ENCODE measurements at regions of chr1 and their contacts with region 1.

Region 1: DNA sequence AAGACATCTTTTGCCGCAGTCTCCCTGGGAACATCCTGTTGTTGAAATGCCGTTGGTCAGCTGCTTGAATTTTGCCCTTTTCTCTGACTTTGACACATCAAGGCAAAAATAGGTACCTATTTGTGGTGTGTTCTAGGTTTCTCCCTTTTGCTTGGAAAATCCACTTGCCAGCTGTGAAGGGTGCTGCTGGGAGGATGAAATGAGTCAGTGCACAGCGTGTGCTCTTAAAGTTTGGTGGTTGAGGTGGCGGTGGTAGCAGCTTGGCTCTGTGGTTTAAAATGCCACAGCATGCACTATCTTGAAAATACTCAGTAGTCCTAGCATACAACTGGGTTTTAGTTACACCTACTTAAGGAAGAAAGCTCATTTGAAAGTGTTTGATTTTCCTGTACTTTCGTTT is 183.8 kb downstream of the DHRS3 start:
- DNase-seq: peak; percentile 89
- H3K4me3 Mint-ChIP-seq: no peak overlapping the region
- H3K27ac Mint-ChIP-seq: peak overlapping the region; percentile 59
- H3K4me1 Mint-ChIP-seq: peaks cover 74% of the 10 kb centered on the region
- H3K27me3 Mint-ChIP-seq: no peaks in the 10 kb centered on the region

Region 2: DNA sequence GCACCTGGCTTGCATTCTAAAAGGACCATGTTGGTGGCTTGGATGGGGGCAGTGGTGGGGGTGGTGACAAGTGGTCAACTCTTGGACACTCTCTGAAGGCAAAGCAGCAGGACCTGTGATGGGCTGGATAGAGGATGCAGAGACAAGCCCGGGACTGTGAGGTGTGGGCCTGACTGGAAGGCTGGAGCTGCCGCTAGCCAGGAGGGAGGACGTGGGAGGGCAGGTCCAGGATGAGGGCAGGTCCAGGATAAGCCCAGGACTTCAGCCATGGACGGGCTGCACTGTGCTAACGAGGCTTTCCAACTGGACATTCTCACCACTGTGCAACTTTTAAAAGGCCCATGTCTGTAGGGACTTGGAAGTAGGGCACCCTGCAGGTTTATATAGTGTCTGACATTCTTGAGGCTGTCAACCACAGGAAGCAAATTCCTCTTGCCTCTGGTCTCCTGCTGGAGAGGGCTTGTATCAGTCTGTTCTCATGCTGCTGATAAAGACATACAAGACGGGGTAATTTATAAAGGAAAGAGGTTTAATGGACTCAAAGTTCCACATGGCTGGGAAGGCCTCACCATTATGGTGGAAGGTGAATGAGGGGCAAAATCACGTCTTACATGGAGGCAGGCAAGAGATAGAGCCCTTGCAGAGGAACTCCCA is 680.5 kb before region 1 on chr1:
- CTCF ChIA-PET with region 1: no interaction called
- intact Hi-C with region 1: no loop called
- DNase-seq: no peak
- H3K4me3 Mint-ChIP-seq: no peak overlapping the region
- H3K27ac Mint-ChIP-seq: no peak overlapping the region
- H3K4me1 Mint-ChIP-seq: peaks cover 10% of the 10 kb centered on the region
- H3K27me3 Mint-ChIP-seq: no peaks in the 10 kb centered on the region

Region 3: GRCh38 chr1:12177999-12178441 is 256.2 kb before region 1 on chr1:
- CTCF ChIA-PET with region 1: no interaction called
- intact Hi-C with region 1: loop called (anchors 10 kb)
- DNase-seq: peak; percentile 96
- H3K4me3 Mint-ChIP-seq: peak overlapping the region; percentile 69
- H3K27ac Mint-ChIP-seq: peak overlapping the region; percentile 90
- H3K4me1 Mint-ChIP-seq: peaks cover 88% of the 10 kb centered on the region
- H3K27me3 Mint-ChIP-seq: no peaks in the 10 kb centered on the region

Region 4: GRCh38 chr1:12386130-12386529 is 48.0 kb before region 1 on chr1:
- CTCF ChIA-PET with region 1: no interaction called
- intact Hi-C with region 1: loop called (anchors 1 kb)
- DNase-seq: peak; percentile 68
- H3K4me3 Mint-ChIP-seq: no peak overlapping the region
- H3K27ac Mint-ChIP-seq: peak overlapping the region; percentile 80
- H3K4me1 Mint-ChIP-seq: peaks cover 43% of the 10 kb centered on the region
- H3K27me3 Mint-ChIP-seq: no peaks in the 10 kb centered on the region

Region 5: DNA sequence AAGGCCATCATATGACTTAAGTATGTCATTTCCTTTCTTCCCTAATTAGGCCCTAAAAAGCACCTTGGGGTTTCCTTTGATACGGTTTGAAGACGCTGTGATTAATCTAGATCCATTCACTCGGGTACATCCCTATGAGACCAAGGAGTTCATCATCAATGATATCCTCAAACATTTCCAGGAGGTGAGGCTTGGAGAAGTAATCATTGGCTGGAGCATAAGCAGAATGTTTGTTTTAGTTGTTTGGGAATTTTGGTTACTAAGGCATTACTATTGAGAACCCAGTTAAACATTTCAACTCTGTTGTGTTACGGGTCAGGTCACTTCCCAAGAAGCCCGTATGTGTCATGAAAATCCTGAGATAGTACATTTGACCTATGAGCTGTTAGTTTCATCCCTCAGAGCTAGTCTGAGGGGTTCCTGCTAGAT is 19.1 kb before region 1 on chr1:
- CTCF ChIA-PET with region 1: interaction called, 7 read pairs
- intact Hi-C with region 1: loop called (anchors 1 kb)
- DNase-seq: no peak
- H3K4me3 Mint-ChIP-seq: no peak overlapping the region
- H3K27ac Mint-ChIP-seq: peak overlapping the region; percentile 26
- H3K4me1 Mint-ChIP-seq: peaks cover 35% of the 10 kb centered on the region
- H3K27me3 Mint-ChIP-seq: no peaks in the 10 kb centered on the region

Region 6: GRCh38 chr1:12472798-12473551 is 38.8 kb after region 1 on chr1:
- CTCF ChIA-PET with region 1: interaction called, 5 read pairs
- intact Hi-C with region 1: loop called (anchors 1 kb)
- DNase-seq: peak; percentile 95
- H3K4me3 Mint-ChIP-seq: peak overlapping the region; percentile 56
- H3K27ac Mint-ChIP-seq: peak overlapping the region; percentile 98
- H3K4me1 Mint-ChIP-seq: peaks cover 89% of the 10 kb centered on the region
- H3K27me3 Mint-ChIP-seq: no peaks in the 10 kb centered on the region

Region 7: DNA sequence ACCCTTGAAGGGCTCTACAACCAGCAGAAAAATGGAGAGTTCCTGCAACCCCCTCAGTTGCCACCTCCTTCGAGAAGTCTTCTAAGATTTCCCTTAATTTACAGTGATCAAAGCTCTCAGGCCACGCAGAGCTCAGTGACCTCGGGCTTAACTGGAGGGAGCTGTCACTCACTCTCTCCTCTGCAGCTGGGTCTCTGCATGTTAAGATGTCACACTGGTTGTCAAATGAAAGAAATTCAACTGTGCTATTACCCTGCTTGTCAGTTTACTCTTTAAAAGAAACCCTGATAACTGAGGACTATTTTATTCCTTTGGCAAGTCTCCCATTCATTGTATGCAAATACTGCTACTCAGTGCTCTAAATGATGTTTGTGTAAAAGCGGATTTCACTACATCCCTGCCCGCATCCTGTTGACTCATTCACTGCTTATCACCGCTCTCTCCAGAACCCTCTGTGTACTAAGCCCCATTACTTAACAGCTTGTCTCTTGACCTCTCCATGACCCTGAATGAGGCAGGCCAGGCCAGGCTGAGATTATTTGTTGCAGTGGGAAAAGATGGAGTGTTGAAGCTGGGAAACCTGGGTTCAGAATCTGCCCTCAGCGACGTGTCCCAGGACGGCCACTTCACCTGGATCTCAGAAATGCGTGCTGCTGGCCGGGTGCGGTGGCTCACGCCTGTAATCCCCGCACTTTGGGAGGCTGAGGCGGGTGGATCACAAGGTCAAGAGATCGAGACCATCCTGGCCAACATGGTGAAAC is 170.1 kb after region 1 on chr1:
- CTCF ChIA-PET with region 1: no interaction called
- intact Hi-C with region 1: loop called (anchors 1 kb)
- DNase-seq: peak; percentile 90
- H3K4me3 Mint-ChIP-seq: peak overlapping the region; percentile 10
- H3K27ac Mint-ChIP-seq: peak overlapping the region; percentile 79
- H3K4me1 Mint-ChIP-seq: peaks cover 71% of the 10 kb centered on the region
- H3K27me3 Mint-ChIP-seq: no peaks in the 10 kb centered on the region

Measured in activated naive CD4-positive, alpha-beta T cell treated with anti-CD3 and anti-CD28 coated beads for 36 hours (primary cell).